T-cell (primary cell): ENCODE measurements at regions of chr2 and their contacts with region 1.

Region 1: DNA sequence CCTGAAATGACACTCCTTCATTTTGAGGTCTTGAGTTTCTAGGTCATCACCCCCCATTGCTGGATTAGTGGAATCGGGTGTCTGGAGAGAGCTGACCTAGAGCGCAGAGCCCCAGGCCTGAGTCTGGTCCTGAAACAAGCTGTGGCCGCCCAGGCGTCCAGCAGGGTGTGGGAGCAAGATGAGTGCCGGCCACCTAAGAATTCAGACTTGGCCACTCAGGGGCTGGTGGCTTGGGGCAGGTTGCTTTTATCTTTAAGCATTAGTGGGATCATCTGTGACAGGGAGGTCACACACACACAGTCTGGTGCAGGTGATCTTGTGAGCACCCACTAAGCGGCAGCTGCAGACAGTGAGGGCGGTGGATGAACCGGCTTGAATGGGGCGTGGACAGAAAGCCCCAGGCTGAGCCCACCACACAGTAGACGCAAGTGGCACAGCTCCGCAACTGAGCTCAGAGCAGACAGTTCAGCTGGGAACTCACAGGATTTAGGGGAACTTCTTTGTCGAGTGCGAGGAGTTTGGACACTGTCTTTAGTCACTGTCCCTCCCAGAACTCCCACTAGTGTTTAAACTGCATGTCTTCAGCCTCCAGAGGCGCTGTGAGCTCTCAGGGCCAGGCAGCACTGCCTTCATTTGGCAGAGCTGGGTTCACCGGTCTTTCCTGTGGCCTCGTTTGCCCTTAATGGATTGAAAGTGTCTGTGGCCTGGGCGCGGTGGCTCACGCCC is 21.5 kb downstream of the ITGB1BP1 start:
- DNase-seq: no peak
- ATAC-seq: no peak
- H3K4me3 ChIP-seq: no peak overlapping the region
- H3K4me3 Mint-ChIP-seq: no peak overlapping the region
- H3K27ac ChIP-seq: no peak overlapping the region
- H3K27ac Mint-ChIP-seq: no peak overlapping the region
- H3K4me1 ChIP-seq: peaks cover 0 to 5% of the 10 kb centered on the region in 2 experiments
- H3K4me1 Mint-ChIP-seq: peaks cover 5 to 9% (median 6%) of the 10 kb centered on the region in 3 donors
- H3K27me3 ChIP-seq: peaks cover 0 to 9% of the 10 kb centered on the region in 2 experiments
- H3K27me3 Mint-ChIP-seq: no peaks in the 10 kb centered on the region

Region 2: DNA sequence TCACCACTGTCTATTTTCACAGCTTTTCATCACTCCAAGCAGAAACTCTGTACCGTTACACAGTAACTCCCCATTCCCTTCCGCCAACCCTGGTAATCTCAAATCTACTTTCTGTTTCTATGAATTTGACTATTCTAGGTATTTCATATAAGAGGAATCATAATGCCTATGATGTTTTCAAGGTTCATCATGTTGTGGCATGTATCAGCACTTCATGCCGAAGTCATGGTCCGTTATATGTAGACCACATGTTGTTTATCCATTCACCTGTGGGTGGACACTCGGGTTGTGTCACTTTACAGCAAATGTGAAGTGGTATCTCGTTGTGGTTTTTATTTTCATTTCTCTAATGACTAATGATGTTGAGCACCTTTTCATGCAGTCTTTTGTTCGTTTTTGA is 43.3 kb after region 1 on chr2:
- CTCF ChIA-PET with region 1: no interaction called
- POLR2A ChIA-PET with region 1: interaction called in 1 of 2 experiments, 11 read pairs
- DNase-seq: no peak
- ATAC-seq: no peak
- H3K4me3 ChIP-seq: no peak overlapping the region
- H3K4me3 Mint-ChIP-seq: no peak overlapping the region
- H3K27ac ChIP-seq: no peak overlapping the region
- H3K27ac Mint-ChIP-seq: no peak overlapping the region
- H3K4me1 ChIP-seq: no peaks in the 10 kb centered on the region
- H3K4me1 Mint-ChIP-seq: peaks cover 0 to 8% (median 0%) of the 10 kb centered on the region in 3 donors
- H3K27me3 ChIP-seq: no peaks in the 10 kb centered on the region
- H3K27me3 Mint-ChIP-seq: no peaks in the 10 kb centered on the region

Region 3: GRCh38 chr2:9885036-9885684 is 483.4 kb after region 1 on chr2:
- CTCF ChIA-PET with region 1: no interaction called
- POLR2A ChIA-PET with region 1: interaction called in 1 of 2 experiments, 13 read pairs
- DNase-seq: no peak
- ATAC-seq: no peak
- H3K4me3 ChIP-seq: no peak overlapping the region
- H3K4me3 Mint-ChIP-seq: no peak overlapping the region
- H3K27ac ChIP-seq: no peak overlapping the region
- H3K27ac Mint-ChIP-seq: peak overlapping the region in 1 of 2 donors; percentile 2
- H3K4me1 ChIP-seq: no peaks in the 10 kb centered on the region
- H3K4me1 Mint-ChIP-seq: peaks cover 6 to 21% (median 14%) of the 10 kb centered on the region in 3 donors
- H3K27me3 ChIP-seq: no peaks in the 10 kb centered on the region
- H3K27me3 Mint-ChIP-seq: no peaks in the 10 kb centered on the region